ENCODE measurements at regions of chr5 and their contacts with region 1.

Region 1: GRCh38 chr5:34486160-34486848 is 169.8 kb upstream of the RAI14 start:
- DNase-seq: peak; percentile 72
- H3K4me3 ChIP-seq: no peak overlapping the region
- H3K27ac ChIP-seq: peak overlapping the region; percentile 25
- H3K27me3 ChIP-seq: no peaks in the 10 kb centered on the region
- CTCF ChIP-seq: peak; percentile 86

Region 2: DNA sequence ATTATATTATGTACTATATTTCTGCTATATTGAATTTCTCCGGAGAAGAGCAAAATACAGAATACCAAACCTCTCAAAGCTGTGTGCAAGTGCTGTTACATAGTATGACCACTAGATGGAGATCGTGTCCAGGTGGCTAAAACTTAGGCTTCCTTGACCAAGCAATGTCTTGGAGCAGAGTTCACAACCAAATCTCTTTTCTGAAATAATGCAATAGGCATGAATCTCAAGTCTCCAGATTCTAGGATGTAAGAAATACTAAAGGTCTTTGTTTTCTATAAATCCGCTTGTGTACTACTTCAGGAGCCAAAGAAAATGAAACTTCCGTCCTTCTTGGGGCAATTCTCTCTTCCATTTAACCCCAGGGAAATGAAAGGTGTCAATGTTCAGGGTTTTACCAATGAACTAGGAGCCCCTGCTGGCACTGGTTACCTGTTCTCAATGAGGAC is 11.7 kb before region 1 on chr5:
- CTCF ChIA-PET with region 1: interaction called, 32 read pairs
- POLR2A ChIA-PET with region 1: no interaction called
- DNase-seq: peak; percentile 44
- H3K4me3 ChIP-seq: no peak overlapping the region
- H3K27ac ChIP-seq: no peak overlapping the region
- H3K27me3 ChIP-seq: no peaks in the 10 kb centered on the region
- CTCF ChIP-seq: peak; percentile 99

Region 3: GRCh38 chr5:34496701-34497469 is 10.6 kb after region 1 on chr5:
- CTCF ChIA-PET with region 1: interaction called, 11 read pairs
- POLR2A ChIA-PET with region 1: interaction called, 4 read pairs
- DNase-seq: no peak
- H3K4me3 ChIP-seq: no peak overlapping the region
- H3K27ac ChIP-seq: peak overlapping the region; percentile 11
- H3K27me3 ChIP-seq: no peaks in the 10 kb centered on the region
- CTCF ChIP-seq: no peak

Region 4: GRCh38 chr5:34533582-34534522 is 47.5 kb after region 1 on chr5:
- CTCF ChIA-PET with region 1: interaction called, 10 read pairs
- POLR2A ChIA-PET with region 1: interaction called, 3 read pairs
- DNase-seq: peak; percentile 87
- H3K4me3 ChIP-seq: no peak overlapping the region
- H3K27ac ChIP-seq: peak overlapping the region; percentile 96
- H3K27me3 ChIP-seq: no peaks in the 10 kb centered on the region
- CTCF ChIP-seq: no peak

Region 5: DNA sequence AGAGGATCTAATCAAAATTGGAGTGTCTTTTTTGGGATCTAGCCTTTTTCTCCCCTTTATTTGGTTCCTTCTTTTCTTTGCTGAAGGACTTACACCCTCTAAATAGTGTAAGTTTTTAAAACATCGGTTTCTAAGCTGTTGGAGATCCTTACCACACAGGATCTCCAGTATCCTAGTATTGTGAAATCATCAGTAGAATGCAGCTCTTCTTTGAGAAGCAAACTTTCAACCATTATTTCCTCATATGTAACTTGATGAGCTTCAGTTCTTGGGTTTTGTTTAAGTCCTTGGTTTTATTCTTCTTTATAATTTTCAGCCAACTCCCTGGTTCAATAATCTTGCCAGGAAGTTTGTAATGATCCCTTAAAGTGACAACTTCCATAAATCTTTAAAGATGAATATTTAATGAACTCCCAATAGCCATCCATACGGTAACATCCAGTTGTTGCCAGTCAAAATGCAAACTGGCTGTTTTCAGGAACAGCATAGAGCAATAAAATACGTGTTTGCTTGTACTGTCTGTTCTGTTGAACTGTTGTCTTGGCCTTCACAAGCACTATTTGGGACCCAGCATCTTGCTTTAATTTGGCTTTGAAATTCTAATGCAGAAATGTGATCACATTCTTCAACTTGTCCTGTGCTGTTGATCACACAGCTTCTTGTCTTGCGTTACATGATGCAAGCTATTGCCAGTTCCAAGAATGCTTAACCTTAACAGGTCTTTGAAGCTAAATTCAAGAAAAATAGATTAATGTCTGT is 317.8 kb after region 1 on chr5:
- CTCF ChIA-PET with region 1: interaction called, 11 read pairs
- POLR2A ChIA-PET with region 1: no interaction called
- DNase-seq: no peak
- H3K4me3 ChIP-seq: no peak overlapping the region
- H3K27ac ChIP-seq: no peak overlapping the region
- H3K27me3 ChIP-seq: no peaks in the 10 kb centered on the region
- CTCF ChIP-seq: no peak

Region 6: DNA sequence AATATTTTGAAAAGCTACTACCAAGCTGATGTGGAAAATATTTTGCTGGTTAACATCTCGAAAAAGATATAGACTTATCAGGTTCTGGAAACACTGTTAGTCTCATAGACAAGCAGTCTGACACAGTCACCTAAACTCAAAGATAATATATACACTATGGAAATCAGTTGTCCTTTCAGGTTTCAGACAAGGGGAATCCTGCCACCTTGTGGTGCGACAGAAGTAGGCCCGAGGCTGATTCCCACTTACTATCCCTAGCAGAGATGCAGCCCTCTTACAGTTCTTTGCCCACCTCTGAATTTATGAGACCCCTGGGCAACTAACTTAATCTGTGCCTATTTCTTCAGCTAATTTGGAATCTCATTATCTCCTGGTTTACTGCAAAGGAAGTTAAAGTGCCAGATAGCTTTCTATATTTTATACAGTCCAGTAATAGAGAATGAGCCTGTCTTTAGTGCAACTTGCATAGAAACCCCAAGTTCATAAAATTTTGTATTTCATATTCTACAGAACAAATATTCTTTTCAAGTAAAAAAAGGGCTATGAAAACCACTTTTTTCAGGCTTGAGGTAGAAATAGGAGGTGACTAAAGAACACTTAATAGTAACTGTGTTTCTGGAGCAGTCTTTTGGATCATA is 412.1 kb after region 1 on chr5:
- CTCF ChIA-PET with region 1: interaction called, 152 read pairs
- POLR2A ChIA-PET with region 1: interaction called, 3 read pairs
- DNase-seq: peak; percentile 49
- H3K4me3 ChIP-seq: no peak overlapping the region
- H3K27ac ChIP-seq: no peak overlapping the region
- H3K27me3 ChIP-seq: no peaks in the 10 kb centered on the region
- CTCF ChIP-seq: peak; percentile 92

Region 7: DNA sequence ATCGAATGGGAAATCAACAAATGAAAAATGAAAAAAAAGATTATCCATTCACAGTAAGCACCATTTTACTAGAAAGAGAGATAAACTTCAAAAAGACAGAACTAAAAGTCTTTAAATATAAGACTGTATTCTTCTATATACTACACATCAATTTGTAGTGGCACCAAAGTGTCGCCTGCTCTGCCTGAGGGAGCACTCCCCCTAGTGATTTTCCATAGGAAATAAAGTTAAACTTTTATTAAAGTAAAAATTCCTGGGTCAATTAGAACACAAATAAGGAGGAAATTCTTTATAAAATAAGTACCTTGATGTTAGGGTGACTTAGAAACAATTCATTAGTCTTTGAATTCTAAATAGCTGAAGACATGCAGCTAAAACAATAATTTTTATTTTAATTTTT is 419.3 kb after region 1 on chr5:
- CTCF ChIA-PET with region 1: interaction called, 152 read pairs
- POLR2A ChIA-PET with region 1: interaction called, 3 read pairs
- DNase-seq: no peak
- H3K4me3 ChIP-seq: no peak overlapping the region
- H3K27ac ChIP-seq: no peak overlapping the region
- H3K27me3 ChIP-seq: no peaks in the 10 kb centered on the region
- CTCF ChIP-seq: peak; percentile 53

Region 8: DNA sequence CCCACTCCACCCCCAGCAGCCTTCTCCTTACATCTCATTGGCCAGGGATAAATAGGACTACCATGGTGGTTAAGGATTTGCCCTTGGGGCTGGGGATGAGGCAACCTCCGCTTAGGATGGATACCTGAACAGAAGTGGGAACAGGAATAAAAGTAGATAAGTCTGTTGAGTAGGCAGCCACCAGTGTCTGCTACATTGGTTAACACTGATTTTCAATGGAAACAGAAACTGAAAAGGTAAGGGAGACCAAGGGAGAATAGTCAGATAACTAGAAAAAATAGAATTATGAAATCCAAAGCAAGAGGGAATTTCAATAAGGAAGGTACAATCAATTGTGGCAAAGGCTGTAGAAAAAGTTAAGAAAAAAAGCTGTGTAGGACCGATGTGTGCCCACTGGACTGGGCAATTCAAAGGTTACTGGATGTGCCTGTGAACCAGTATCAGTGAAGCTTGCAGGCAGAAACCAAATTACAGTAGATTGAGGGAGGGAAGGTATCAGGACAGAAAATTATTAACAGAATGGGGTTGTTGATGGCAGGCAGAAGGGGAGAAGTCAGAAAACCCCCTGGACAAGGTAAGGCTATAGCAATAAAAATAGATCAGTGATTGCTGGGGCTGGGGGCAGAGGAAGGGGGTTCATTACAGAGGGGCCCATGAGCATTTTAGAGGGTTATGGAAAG is 491.8 kb after region 1 on chr5:
- CTCF ChIA-PET with region 1: no interaction called
- POLR2A ChIA-PET with region 1: no interaction called
- DNase-seq: no peak
- H3K4me3 ChIP-seq: no peak overlapping the region
- H3K27ac ChIP-seq: no peak overlapping the region
- H3K27me3 ChIP-seq: peaks cover 17% of the 10 kb centered on the region
- CTCF ChIP-seq: no peak

Measured in AG04450 (cell line).